Mucosa of descending colon (tissue), 3 donors: ENCODE measurements at regions of chr5 and their contacts with region 1.

Region 1: GRCh38 chr5:160399402-160400353 is at the start of gene FAM200C:
- DNase-seq: peak; percentile 87 to 94 (median 92)
- ATAC-seq: peak; percentile 99
- H3K4me3 ChIP-seq: peak within 1 kb of the TSS; percentile 43
- H3K4me1 ChIP-seq: peaks cover 11% of the 10 kb centered on the region
- CTCF ChIP-seq: no peak
- total RNA-seq, gene FAM200C: 1.7 to 4.3 (median 1.9) TPM

Region 2: GRCh38 chr5:160011471-160011870 is 388.2 kb before region 1 on chr5:
- intact Hi-C with region 1: loop called in 1 of 2 experiments (anchors 10 kb)
- DNase-seq: peak in 1 of 3 donors; percentile 41
- ATAC-seq: peak; percentile 44
- H3K4me3 ChIP-seq: no peak overlapping the region
- H3K4me1 ChIP-seq: peaks cover 26% of the 10 kb centered on the region
- CTCF ChIP-seq: no peak